ENCODE measurements at regions of chrX and their contacts with region 1.

Region 1: DNA sequence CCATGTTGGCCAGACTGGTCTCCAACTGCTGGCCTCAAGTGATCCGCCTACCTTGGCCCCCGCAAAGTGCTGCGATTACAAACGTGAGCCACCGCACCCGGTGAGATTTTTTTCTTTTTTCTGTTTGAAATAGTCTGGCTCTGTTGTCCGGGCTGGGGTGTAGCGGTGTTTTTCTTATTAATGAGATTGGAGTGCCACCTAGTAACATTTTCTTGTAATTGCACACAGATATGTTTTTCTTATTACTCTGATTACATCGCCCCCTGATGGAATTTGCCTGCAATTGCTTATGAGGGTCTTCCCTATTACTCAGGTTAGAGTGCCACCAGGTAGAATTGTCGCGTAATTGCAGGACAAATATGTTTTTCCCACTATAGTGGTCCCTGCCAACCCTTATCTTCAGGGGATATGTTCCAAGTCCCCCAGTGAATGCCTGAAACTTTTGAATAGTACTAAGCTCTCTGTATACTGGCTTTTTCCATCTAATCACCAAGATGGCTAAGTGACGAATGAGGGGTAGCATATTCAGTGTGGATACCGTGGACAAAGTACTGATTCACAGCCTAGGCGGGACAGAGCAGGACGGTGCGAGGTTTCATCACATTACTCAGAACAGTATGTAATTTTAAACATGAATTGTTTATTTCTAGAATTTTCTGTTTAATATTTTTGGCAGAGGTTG is 8.6 kb upstream of the PDHA1 start:
- DNase-seq: peak; percentile 71
- H3K4me3 ChIP-seq: no peak overlapping the region
- H3K27ac ChIP-seq: no peak overlapping the region
- H3K4me1 ChIP-seq: peaks cover 16% of the 10 kb centered on the region
- H3K27me3 ChIP-seq: no peaks in the 10 kb centered on the region
- CTCF ChIP-seq: peak; percentile 62

Region 2: DNA sequence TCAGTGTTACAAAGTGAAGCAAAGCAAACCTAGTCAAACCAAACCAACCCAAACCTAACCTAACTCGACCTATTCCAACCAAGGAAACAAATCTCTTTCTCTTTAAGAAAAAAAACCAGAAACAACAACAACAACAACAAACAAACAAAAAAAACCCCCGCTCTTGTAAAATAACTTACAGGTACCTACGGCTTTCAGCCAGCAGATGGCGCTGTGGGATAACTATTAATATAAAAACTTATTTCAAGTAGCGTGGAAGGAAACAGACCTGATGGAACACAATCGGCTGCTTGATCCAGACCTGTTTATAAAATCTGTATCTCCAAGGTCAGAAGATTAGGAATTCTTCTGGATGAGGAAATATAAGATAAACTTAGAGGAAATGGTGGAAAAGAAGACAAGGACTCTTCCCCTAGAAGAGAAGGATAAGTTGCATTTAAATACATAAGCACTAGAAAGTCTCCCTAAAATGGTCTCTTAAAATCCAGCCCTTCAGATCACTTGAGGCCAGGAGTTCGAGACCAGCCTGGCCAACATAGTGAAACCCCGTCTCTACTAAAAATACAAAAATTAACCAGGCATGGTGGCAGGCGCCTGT is 944.0 kb before region 1 on chrX:
- CTCF ChIA-PET with region 1: interaction called, 13 read pairs
- POLR2A ChIA-PET with region 1: no interaction called
- intact Hi-C with region 1: loop called (anchors 1 kb)
- DNase-seq: peak; percentile 79
- H3K4me3 ChIP-seq: no peak overlapping the region
- H3K27ac ChIP-seq: no peak overlapping the region
- H3K4me1 ChIP-seq: peaks cover 4% of the 10 kb centered on the region
- H3K27me3 ChIP-seq: no peaks in the 10 kb centered on the region
- CTCF ChIP-seq: peak; percentile 90

Region 3: DNA sequence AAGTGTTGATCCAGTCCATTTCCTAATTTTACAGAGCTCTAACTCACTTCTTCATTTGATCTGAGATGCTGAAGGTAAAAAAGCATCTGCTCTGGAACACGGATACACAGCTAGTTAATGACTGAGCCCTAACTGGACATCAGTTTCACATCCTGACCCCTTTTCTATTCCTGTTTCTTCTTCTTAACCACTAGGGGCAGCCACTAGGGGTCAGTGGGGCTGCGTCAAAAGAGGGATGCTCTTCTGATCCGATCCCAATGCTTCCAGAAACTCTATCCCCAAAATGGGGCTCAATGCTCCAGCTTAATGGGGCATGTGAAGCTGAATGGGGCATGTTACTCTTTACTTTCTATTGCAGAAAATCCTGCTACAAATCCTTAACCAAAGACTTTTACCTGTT is 317.8 kb before region 1 on chrX:
- CTCF ChIA-PET with region 1: interaction called, 10 read pairs
- POLR2A ChIA-PET with region 1: no interaction called
- intact Hi-C with region 1: loop called (anchors 1 kb)
- DNase-seq: peak; percentile 63
- H3K4me3 ChIP-seq: no peak overlapping the region
- H3K27ac ChIP-seq: no peak overlapping the region
- H3K4me1 ChIP-seq: no peaks in the 10 kb centered on the region
- H3K27me3 ChIP-seq: no peaks in the 10 kb centered on the region
- CTCF ChIP-seq: peak; percentile 68

Region 4: DNA sequence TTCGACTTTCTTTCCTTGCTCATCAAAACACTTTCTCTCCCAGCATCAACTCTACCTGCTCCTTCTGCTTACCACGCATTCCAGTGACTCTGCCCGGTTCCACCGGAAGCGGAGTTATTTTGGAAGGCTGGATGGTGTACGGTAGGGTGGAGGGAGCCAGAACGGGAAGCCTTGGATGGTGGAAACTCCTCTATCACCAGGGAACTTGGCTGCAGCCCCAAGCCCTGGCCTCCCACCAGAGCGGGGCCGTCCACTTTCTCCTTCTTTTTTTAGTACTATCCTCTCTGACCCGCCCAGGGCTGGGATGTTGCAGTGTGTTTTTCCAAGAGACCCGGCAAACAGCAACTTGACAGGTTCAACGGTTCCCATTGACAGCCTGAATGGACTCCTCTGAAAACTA is 240.4 kb before region 1 on chrX:
- CTCF ChIA-PET with region 1: interaction called, 3 read pairs
- POLR2A ChIA-PET with region 1: no interaction called
- intact Hi-C with region 1: loop called (anchors 5 kb)
- DNase-seq: no peak
- H3K4me3 ChIP-seq: no peak overlapping the region
- H3K27ac ChIP-seq: no peak overlapping the region
- H3K4me1 ChIP-seq: peaks cover 8% of the 10 kb centered on the region
- H3K27me3 ChIP-seq: no peaks in the 10 kb centered on the region
- CTCF ChIP-seq: no peak

Region 5: DNA sequence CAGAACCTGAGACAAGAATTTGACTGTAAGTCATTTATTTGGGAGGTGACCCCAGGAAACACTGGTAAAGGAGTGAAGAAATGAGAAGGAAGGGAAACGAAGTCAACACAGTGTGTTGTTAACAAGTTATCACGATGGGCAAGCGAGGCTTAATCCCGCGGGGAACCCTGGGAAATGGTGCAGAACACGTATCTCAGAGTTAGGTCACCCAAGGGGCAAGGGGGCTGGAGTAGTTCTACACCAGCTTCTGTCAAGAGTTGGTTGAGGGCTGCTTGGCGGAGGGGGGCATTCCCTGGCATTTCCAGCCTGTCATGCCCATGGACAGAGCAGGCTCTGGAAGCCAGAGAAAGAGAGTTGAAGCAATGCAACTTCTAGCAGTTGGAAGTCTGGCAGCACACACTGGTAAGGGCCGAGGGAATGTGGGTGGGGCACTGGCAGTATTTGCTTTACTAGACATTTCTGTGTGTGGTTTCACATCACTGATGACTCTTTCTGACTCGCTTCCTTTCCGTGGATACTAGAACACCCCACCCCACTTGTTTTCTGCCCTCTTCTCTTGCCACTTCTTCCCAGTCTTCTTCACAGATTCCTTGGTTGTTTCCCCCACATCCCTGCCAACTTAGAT is 160.6 kb before region 1 on chrX:
- CTCF ChIA-PET with region 1: interaction called, 15 read pairs
- POLR2A ChIA-PET with region 1: no interaction called
- intact Hi-C with region 1: loop called (anchors 1 kb)
- DNase-seq: peak; percentile 74
- H3K4me3 ChIP-seq: no peak overlapping the region
- H3K27ac ChIP-seq: peak overlapping the region; percentile 96
- H3K4me1 ChIP-seq: peaks cover 64% of the 10 kb centered on the region
- H3K27me3 ChIP-seq: no peaks in the 10 kb centered on the region
- CTCF ChIP-seq: no peak

Region 6: DNA sequence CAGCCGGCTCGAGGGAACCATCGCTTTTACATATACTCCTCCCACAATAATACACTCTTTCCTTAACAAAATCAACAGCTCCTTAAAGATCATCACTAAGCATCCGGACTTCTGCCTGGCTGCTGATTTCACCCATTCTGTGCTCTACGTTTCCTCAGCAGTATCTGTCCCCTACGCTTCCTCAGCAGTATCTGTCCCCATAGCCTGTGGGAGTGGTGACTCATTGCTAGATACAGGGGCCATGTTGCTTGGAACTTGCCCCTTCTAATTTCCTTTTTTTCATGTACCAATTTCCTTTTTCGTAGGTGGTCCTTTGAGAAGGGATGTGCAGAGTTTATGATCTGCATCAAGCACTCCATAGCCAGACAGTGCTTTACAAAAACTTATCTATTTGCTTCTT is 161.6 kb after region 1 on chrX:
- CTCF ChIA-PET with region 1: no interaction called
- POLR2A ChIA-PET with region 1: no interaction called
- intact Hi-C with region 1: no loop called
- DNase-seq: no peak
- H3K4me3 ChIP-seq: no peak overlapping the region
- H3K27ac ChIP-seq: no peak overlapping the region
- H3K4me1 ChIP-seq: no peaks in the 10 kb centered on the region
- H3K27me3 ChIP-seq: no peaks in the 10 kb centered on the region
- CTCF ChIP-seq: no peak

Measured in A673 (cell line).